H1 (cell line): ENCODE measurements at regions of chr10 and their contacts with region 1.

Region 1: DNA sequence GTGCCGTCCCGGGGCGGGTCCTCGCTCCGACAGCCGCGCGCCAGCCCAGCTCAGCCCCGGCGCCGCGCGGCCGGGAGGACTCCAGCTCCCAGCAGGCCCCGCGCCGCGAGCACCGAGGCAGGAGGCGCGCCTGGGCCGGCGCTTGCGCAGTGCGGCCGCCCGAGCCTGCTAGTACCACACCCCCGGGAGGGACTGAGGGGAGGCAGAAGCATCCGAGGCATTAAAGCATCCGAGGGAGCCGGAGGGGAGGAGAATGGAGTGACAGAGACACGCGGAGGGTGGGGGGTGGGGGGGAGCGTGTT is at the start of gene GRK5:
- DNase-seq: peak; percentile 80 to 89
- H3K4me3 ChIP-seq: peak within 1 kb of the TSS; percentile 51 to 79 (median 62)
- H3K27ac ChIP-seq: peak within 1 kb of the TSS; percentile 41; the same call in 1 of the 2 replicates
- H3K4me1 ChIP-seq: peaks cover 3 to 8% (median 6%) of the 10 kb centered on the region in 4 experiments
- H3K27me3 ChIP-seq: peaks cover 5 to 17% (median 14%) of the 10 kb centered on the region in 4 experiments
- CTCF ChIP-seq: no peak
- EP300 ChIP-seq: no peak
- POLR2A ChIP-seq: no peak; a peak in 1 of 3 replicates
- RAD21 ChIP-seq: no peak
- total RNA-seq, gene GRK5: 2.4 and 2.5 TPM in 2 replicates

Region 2: GRCh38 chr10:119217991-119218490 is 10.7 kb after region 1 on chr10:
- CTCF ChIA-PET with region 1: interaction called, 19 read pairs
- POLR2A ChIA-PET with region 1: interaction called, 3 read pairs
- DNase-seq: no peak
- H3K4me3 ChIP-seq: no peak overlapping the region
- H3K27ac ChIP-seq: no peak overlapping the region
- H3K4me1 ChIP-seq: peaks cover 2 to 24% (median 11%) of the 10 kb centered on the region in 4 experiments; a peak in 6 of 7 replicates
- H3K27me3 ChIP-seq: peaks cover 0 to 2% (median 0%) of the 10 kb centered on the region in 4 experiments; a peak in 1 of 7 replicates
- CTCF ChIP-seq: no peak
- EP300 ChIP-seq: no peak
- POLR2A ChIP-seq: no peak
- RAD21 ChIP-seq: no peak

Region 3: GRCh38 chr10:119246862-119247549 is 39.7 kb after region 1 on chr10:
- CTCF ChIA-PET with region 1: interaction called, 10 read pairs
- POLR2A ChIA-PET with region 1: no interaction called
- DNase-seq: no peak
- H3K4me3 ChIP-seq: no peak overlapping the region
- H3K27ac ChIP-seq: no peak overlapping the region
- H3K4me1 ChIP-seq: peaks cover 0 to 6% (median 4%) of the 10 kb centered on the region in 4 experiments; a peak in 4 of 7 replicates
- H3K27me3 ChIP-seq: peaks cover 0 to under 1% (median 0%) of the 10 kb centered on the region in 4 experiments; a peak in 4 of 7 replicates
- CTCF ChIP-seq: no peak
- EP300 ChIP-seq: no peak
- POLR2A ChIP-seq: no peak
- RAD21 ChIP-seq: no peak

Region 4: GRCh38 chr10:119494236-119495060 is 287.1 kb after region 1 on chr10:
- CTCF ChIA-PET with region 1: interaction called, 13 read pairs
- POLR2A ChIA-PET with region 1: no interaction called
- DNase-seq: no peak
- H3K4me3 ChIP-seq: no peak overlapping the region
- H3K27ac ChIP-seq: no peak overlapping the region
- H3K4me1 ChIP-seq: peaks cover 0 to 4% (median 0%) of the 10 kb centered on the region in 4 experiments; a peak in 3 of 7 replicates
- H3K27me3 ChIP-seq: no peaks in the 10 kb centered on the region; a peak in 2 of 7 replicates
- CTCF ChIP-seq: no peak
- EP300 ChIP-seq: no peak
- POLR2A ChIP-seq: no peak
- RAD21 ChIP-seq: no peak